MCF 10A (cell line): ENCODE measurements at regions of chr5 and their contacts with region 1.

Region 1: GRCh38 chr5:82259172-82259800 is 18.9 kb downstream of the RPS23 start:
- DNase-seq: peak; percentile 25
- H3K4me3 Mint-ChIP-seq: no peak overlapping the region
- H3K27ac Mint-ChIP-seq: no peak overlapping the region
- H3K4me1 Mint-ChIP-seq: no peaks in the 10 kb centered on the region
- H3K27me3 Mint-ChIP-seq: no peaks in the 10 kb centered on the region
- CTCF ChIP-seq: peak; percentile 24

Region 2: GRCh38 chr5:81590498-81591384 is 668.5 kb before region 1 on chr5:
- CTCF ChIA-PET with region 1: no interaction called
- POLR2A ChIA-PET with region 1: no interaction called
- intact Hi-C with region 1: no loop called
- DNase-seq: no peak
- H3K4me3 Mint-ChIP-seq: no peak overlapping the region
- H3K27ac Mint-ChIP-seq: no peak overlapping the region
- H3K4me1 Mint-ChIP-seq: no peaks in the 10 kb centered on the region
- H3K27me3 Mint-ChIP-seq: no peaks in the 10 kb centered on the region
- CTCF ChIP-seq: no peak

Region 3: GRCh38 chr5:81936066-81936465 is 323.2 kb before region 1 on chr5:
- CTCF ChIA-PET with region 1: no interaction called
- POLR2A ChIA-PET with region 1: no interaction called
- intact Hi-C with region 1: no loop called
- DNase-seq: no peak
- H3K4me3 Mint-ChIP-seq: no peak overlapping the region
- H3K27ac Mint-ChIP-seq: no peak overlapping the region
- H3K4me1 Mint-ChIP-seq: no peaks in the 10 kb centered on the region
- H3K27me3 Mint-ChIP-seq: no peaks in the 10 kb centered on the region
- CTCF ChIP-seq: no peak

Region 4: GRCh38 chr5:82174128-82174918 is 85.0 kb before region 1 on chr5:
- CTCF ChIA-PET with region 1: interaction called, 7 read pairs
- POLR2A ChIA-PET with region 1: no interaction called
- intact Hi-C with region 1: loop called (anchors 1 kb)
- DNase-seq: peak; percentile 74
- H3K4me3 Mint-ChIP-seq: no peak overlapping the region
- H3K27ac Mint-ChIP-seq: no peak overlapping the region
- H3K4me1 Mint-ChIP-seq: no peaks in the 10 kb centered on the region
- H3K27me3 Mint-ChIP-seq: no peaks in the 10 kb centered on the region
- CTCF ChIP-seq: peak; percentile 56

Region 5: DNA sequence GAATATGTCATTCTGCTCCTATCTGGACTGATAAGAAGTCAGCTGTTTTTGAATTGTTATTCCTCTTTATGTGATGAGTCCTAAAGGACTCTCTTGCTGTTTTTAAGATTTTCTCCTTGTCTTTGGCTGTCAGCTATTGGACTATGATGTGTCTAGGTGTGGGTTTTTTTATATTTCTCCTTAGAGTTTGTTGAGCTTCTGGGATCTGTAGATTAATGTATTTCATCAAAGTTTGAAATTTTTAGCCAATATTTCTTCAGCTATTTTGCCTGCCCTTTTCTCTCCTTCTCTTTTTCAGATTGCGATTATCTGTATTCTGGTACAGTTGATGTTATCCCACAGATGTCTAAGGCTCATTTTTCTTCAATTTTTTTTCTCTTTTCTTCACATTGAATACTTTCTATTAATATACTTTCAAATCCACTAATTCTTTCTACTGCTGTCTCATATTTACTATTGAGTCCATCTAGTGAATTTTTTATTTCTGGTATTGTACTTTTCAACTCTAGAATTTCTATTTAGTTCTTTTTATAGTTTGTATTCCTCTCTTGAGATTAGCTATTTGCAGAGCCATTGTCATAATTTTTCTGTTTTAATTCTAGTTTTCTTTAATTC is 12.2 kb before region 1 on chr5:
- CTCF ChIA-PET with region 1: interaction called, 36 read pairs
- POLR2A ChIA-PET with region 1: interaction called, 3 read pairs
- intact Hi-C with region 1: no loop called
- DNase-seq: no peak
- H3K4me3 Mint-ChIP-seq: no peak overlapping the region
- H3K27ac Mint-ChIP-seq: no peak overlapping the region
- H3K4me1 Mint-ChIP-seq: no peaks in the 10 kb centered on the region
- H3K27me3 Mint-ChIP-seq: no peaks in the 10 kb centered on the region
- CTCF ChIP-seq: no peak

Region 6: GRCh38 chr5:82278095-82278918 is 19.0 kb after region 1 on chr5 and contains the start of gene RPS23:
- CTCF ChIA-PET with region 1: interaction called, 18 read pairs
- POLR2A ChIA-PET with region 1: interaction called, 16 read pairs
- intact Hi-C with region 1: no loop called
- DNase-seq: peak; percentile 95
- H3K4me3 Mint-ChIP-seq: peak within 1 kb of the TSS; percentile 96
- H3K27ac Mint-ChIP-seq: peak within 1 kb of the TSS; percentile 99
- H3K4me1 Mint-ChIP-seq: peaks cover 19% of the 10 kb centered on the region
- H3K27me3 Mint-ChIP-seq: no peaks in the 10 kb centered on the region
- CTCF ChIP-seq: no peak
- total RNA-seq, gene RPS23: 2,870 and 3,151 TPM in 2 replicates